H1 (cell line): ENCODE measurements at regions of chr2 and their contacts with region 1.

Region 1: DNA sequence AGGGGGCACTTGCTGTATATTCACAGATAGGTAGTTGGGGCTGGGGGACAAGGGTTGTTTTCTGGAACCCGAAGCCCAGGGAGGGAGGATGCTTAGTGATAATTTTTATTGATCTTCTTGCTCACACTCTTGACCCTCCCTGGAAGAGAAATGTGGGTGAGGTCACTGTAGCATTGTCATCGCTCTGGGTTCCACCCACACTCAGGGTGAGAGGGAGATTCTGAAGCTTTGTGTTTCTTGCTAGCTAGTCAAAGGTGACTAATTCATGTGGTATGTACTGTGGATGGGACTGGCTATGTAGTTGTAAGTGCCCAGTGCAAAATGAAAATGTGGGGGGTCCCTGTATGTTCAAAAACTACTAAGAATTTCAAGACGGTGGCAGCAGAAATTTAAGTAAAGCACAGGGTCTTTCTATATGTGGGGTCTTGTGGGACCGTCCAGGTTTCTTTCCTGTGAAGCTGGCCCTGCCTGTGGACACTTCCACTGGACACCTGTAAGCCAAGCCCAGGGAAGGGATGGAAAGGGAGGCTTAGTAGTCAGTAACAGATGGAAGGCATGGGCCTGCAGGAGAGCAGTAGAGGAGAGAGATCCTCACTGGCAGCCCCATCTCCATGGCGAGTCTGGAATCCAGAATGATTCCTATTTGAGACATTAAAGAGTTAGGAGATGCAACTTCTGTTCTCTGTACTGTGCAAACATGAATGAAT is 35.0 kb downstream of the TSN start:
- DNase-seq: no peak
- H3K4me3 ChIP-seq: no peak overlapping the region
- H3K27ac ChIP-seq: no peak overlapping the region
- H3K4me1 ChIP-seq: peaks cover 2 to 14% (median 11%) of the 10 kb centered on the region in 4 experiments
- H3K27me3 ChIP-seq: no peaks in the 10 kb centered on the region
- CTCF ChIP-seq: no peak
- EP300 ChIP-seq: no peak
- POLR2A ChIP-seq: no peak
- RAD21 ChIP-seq: no peak

Region 2: GRCh38 chr2:121634354-121635307 is 155.8 kb before region 1 on chr2:
- CTCF ChIA-PET with region 1: no interaction called
- POLR2A ChIA-PET with region 1: no interaction called
- DNase-seq: no peak
- H3K4me3 ChIP-seq: no peak overlapping the region
- H3K27ac ChIP-seq: no peak overlapping the region
- H3K4me1 ChIP-seq: no peaks in the 10 kb centered on the region
- H3K27me3 ChIP-seq: no peaks in the 10 kb centered on the region
- CTCF ChIP-seq: no peak
- EP300 ChIP-seq: no peak
- POLR2A ChIP-seq: no peak
- RAD21 ChIP-seq: no peak

Region 3: DNA sequence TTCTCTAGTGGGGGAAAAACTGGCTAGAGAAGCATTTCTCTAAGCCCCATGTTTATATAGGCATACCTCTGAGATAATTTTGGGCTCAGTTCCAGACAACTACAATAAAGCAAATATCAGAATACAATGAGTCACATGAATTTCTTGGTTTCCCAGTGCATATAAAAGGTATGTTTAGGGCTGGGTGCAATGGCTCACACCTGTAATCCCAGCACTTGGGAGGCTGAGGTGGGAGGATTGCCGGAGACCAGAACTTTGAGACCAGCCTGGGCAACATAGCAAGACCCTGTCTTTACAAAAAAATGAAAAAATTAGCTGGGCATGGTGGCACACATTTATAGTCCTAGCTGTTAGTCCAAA is 12.7 kb before region 1 on chr2:
- CTCF ChIA-PET with region 1: no interaction called
- POLR2A ChIA-PET with region 1: interaction called, 10 read pairs
- DNase-seq: no peak
- H3K4me3 ChIP-seq: no peak overlapping the region
- H3K27ac ChIP-seq: no peak overlapping the region
- H3K4me1 ChIP-seq: peaks cover 0 to 6% (median 1%) of the 10 kb centered on the region in 4 experiments; a peak in 3 of 7 replicates
- H3K27me3 ChIP-seq: no peaks in the 10 kb centered on the region
- CTCF ChIP-seq: no peak
- EP300 ChIP-seq: no peak
- POLR2A ChIP-seq: no peak
- RAD21 ChIP-seq: no peak

Region 4: GRCh38 chr2:121804340-121804739 is 13.9 kb after region 1 on chr2:
- CTCF ChIA-PET with region 1: interaction called, 7 read pairs
- POLR2A ChIA-PET with region 1: interaction called, 14 read pairs
- DNase-seq: no peak
- H3K4me3 ChIP-seq: peak overlapping the region in 1 of 4 experiments; percentile 34; a peak in 1 of 8 replicates
- H3K27ac ChIP-seq: no peak overlapping the region
- H3K4me1 ChIP-seq: peaks cover 2 to 18% (median 12%) of the 10 kb centered on the region in 4 experiments; a peak in 5 of 7 replicates
- H3K27me3 ChIP-seq: no peaks in the 10 kb centered on the region
- CTCF ChIP-seq: no peak
- EP300 ChIP-seq: no peak
- POLR2A ChIP-seq: no peak
- RAD21 ChIP-seq: no peak

Region 5: GRCh38 chr2:121944072-121944831 is 153.8 kb after region 1 on chr2:
- CTCF ChIA-PET with region 1: no interaction called
- POLR2A ChIA-PET with region 1: no interaction called
- DNase-seq: no peak
- H3K4me3 ChIP-seq: no peak overlapping the region
- H3K27ac ChIP-seq: no peak overlapping the region
- H3K4me1 ChIP-seq: no peaks in the 10 kb centered on the region
- H3K27me3 ChIP-seq: no peaks in the 10 kb centered on the region
- CTCF ChIP-seq: no peak
- EP300 ChIP-seq: no peak
- POLR2A ChIP-seq: no peak
- RAD21 ChIP-seq: no peak